ENCODE measurements at regions of chr21 and their contacts with region 1.

Region 1: DNA sequence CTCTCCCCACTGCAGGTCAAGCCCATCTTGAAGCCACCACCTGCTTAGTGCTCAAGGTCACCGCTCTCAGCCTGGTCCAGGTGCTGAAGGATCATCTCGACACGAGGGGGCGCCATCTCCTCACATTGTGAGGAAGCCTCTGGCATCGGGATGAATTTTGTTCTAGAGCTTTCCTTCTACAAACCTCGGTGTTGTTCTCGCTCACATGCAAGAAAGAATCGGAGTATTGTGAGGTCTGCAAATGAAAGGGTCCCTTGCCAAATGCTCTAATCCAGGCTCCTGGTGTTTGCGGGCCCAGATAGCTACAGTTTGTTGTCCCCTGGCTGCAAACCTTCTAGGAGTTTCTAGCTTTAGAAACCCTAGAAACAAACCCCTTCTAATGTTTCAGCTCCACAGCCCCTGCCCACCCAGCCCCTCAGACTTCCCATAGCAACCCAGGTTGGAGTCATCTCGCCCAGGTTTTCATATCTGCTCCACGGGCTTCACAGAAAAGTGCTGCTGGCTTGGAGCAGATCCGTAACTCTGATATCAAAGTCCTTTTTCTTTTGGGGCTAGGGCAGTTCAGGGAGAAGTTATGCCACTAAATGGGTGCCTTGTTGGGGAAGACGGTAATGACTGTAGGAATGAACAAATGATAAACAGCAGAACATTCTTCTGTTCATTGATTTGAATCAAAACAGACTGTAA is 8.6 kb upstream of the ATP5PO start:
- DNase-seq: peak; percentile 70
- ATAC-seq: peak; percentile 99
- H3K4me3 ChIP-seq: peak overlapping the region in 2 of 3 experiments; percentile 38 to 44; a peak in 4 of 6 replicates
- H3K27ac ChIP-seq: no peak overlapping the region
- H3K4me1 ChIP-seq: peaks cover 17% of the 10 kb centered on the region
- H3K27me3 ChIP-seq: no peaks in the 10 kb centered on the region
- CTCF ChIP-seq: peak; percentile 97
- EP300 ChIP-seq: no peak
- POLR2A ChIP-seq: no peak
- RAD21 ChIP-seq: peak; percentile 93

Region 2: DNA sequence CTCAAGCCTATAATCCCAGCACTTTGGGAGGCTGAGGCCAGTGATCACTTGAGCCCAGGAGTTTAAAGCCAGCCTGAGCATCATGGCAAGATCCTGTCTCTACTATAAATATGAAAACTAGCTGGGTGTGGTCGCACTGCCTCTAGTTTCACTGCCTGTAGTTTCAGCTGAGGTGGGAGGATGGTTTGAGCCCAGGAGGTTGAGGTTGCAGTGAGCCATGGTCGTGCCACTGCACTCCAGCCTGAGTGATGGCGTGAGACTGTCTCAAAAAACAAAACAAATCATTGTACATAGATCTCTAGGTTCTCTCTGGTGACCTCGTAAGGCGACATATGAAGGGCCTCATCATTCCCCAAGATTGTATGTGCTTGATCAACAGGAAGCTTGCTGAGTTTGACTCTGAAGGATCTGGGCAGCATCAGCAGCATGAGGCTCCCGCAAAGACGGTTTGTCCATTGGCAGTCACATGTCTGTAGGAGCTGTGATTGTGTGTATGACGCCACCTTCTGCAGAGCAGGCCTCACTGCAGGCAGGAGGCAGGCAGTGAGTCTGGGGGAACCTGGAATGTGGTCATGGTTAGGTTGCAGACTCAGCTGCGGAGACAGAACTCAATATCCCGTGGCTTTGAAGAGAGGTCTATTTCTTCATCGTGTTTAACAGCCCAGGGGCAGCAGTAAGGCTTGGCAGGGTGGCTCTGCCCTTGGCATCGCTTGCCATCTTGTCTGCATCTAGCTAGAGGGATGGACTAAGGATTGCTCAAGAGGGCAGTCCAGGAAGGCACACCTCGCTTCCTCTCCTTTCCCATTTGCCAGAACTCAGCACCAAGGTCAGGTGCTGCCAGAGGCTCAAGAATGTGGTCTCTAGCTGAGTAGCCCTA is 22.6 kb before region 1 on chr21:
- CTCF ChIA-PET with region 1: no interaction called
- POLR2A ChIA-PET with region 1: no interaction called
- in situ Hi-C with region 1: no loop called
- intact Hi-C with region 1: no loop called
- DNase-seq: peak; percentile 20
- ATAC-seq: peak; percentile 88
- H3K4me3 ChIP-seq: no peak overlapping the region
- H3K27ac ChIP-seq: no peak overlapping the region
- H3K4me1 ChIP-seq: no peaks in the 10 kb centered on the region
- H3K27me3 ChIP-seq: no peaks in the 10 kb centered on the region
- CTCF ChIP-seq: peak; percentile 61
- EP300 ChIP-seq: no peak
- POLR2A ChIP-seq: no peak
- RAD21 ChIP-seq: 0 out of 2 replicates have a peak, but pooled peaks have one; percentile 17

Region 3: GRCh38 chr21:34073032-34073869 is 149.0 kb after region 1 on chr21 and contains the starts of genes MRPS6 and SLC5A3:
- CTCF ChIA-PET with region 1: no interaction called
- POLR2A ChIA-PET with region 1: interaction called, 4 read pairs
- in situ Hi-C with region 1: loop called (anchors 5 kb)
- intact Hi-C with region 1: loop called (anchors 5 kb)
- DNase-seq: peak; percentile 47
- ATAC-seq: peak; percentile 84
- H3K4me3 ChIP-seq: peak within 1 kb of the TSS; percentile 76 to 84 (median 78)
- H3K27ac ChIP-seq: peak within 1 kb of the TSS; percentile 74
- H3K4me1 ChIP-seq: peaks cover 46% of the 10 kb centered on the region
- H3K27me3 ChIP-seq: 0 out of 5 replicates have a peak, but pooled peaks cover 0 to 4% of the 10 kb centered on the region in 2 experiments
- CTCF ChIP-seq: peak; percentile 73
- EP300 ChIP-seq: no peak
- POLR2A ChIP-seq: peak; percentile 94 to 99
- RAD21 ChIP-seq: peak; percentile 32; the same call in 1 of the 2 replicates
- total RNA-seq, gene MRPS6: 26.9 and 35.5 TPM in 2 replicates
- total RNA-seq, gene SLC5A3: 10.1 and 11.2 TPM in 2 replicates

Region 4: GRCh38 chr21:34202553-34203372 is 278.5 kb after region 1 on chr21:
- CTCF ChIA-PET with region 1: interaction called, 8 read pairs
- POLR2A ChIA-PET with region 1: interaction called, 4 read pairs
- in situ Hi-C with region 1: loop called (anchors 5 kb)
- intact Hi-C with region 1: loop called (anchors 5 kb)
- DNase-seq: no peak
- ATAC-seq: peak; percentile 42
- H3K4me3 ChIP-seq: peak overlapping the region; percentile 47 to 77 (median 61); a peak in 4 of 6 replicates
- H3K27ac ChIP-seq: peak overlapping the region; percentile 70
- H3K4me1 ChIP-seq: peaks cover 52% of the 10 kb centered on the region
- H3K27me3 ChIP-seq: no peaks in the 10 kb centered on the region
- CTCF ChIP-seq: no peak
- EP300 ChIP-seq: no peak
- POLR2A ChIP-seq: no peak
- RAD21 ChIP-seq: no peak

Region 5: DNA sequence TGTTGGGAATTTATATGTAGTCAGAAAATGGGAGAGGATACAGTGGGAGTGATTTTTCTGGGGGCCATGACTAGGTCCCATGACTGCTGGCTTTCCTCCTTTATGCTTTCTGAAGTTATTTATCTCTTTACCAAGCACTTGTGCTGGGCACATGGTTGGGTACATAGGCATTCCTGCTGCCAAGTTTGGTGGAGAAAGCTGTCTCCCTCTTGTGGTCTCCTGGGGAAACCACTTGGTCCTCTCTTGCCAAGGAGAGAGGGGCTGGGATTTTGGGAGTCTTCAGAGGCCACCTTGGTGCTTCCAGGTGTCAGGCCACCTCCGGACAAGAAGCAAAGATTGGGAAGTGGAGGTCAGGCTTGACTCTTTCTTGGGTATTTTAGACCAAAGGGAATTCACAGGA is 319.3 kb after region 1 on chr21:
- CTCF ChIA-PET with region 1: interaction called, 17 read pairs
- POLR2A ChIA-PET with region 1: no interaction called
- in situ Hi-C with region 1: loop called (anchors 5 kb)
- intact Hi-C with region 1: loop called (anchors 2 kb)
- DNase-seq: peak; percentile 5
- ATAC-seq: peak; percentile 57; the same call in 2 of the 3 replicates
- H3K4me3 ChIP-seq: no peak overlapping the region
- H3K27ac ChIP-seq: no peak overlapping the region
- H3K4me1 ChIP-seq: no peaks in the 10 kb centered on the region
- H3K27me3 ChIP-seq: no peaks in the 10 kb centered on the region
- CTCF ChIP-seq: peak; percentile 59
- EP300 ChIP-seq: no peak
- POLR2A ChIP-seq: no peak
- RAD21 ChIP-seq: peak; percentile 14; the same call in 1 of the 2 replicates

Region 6: DNA sequence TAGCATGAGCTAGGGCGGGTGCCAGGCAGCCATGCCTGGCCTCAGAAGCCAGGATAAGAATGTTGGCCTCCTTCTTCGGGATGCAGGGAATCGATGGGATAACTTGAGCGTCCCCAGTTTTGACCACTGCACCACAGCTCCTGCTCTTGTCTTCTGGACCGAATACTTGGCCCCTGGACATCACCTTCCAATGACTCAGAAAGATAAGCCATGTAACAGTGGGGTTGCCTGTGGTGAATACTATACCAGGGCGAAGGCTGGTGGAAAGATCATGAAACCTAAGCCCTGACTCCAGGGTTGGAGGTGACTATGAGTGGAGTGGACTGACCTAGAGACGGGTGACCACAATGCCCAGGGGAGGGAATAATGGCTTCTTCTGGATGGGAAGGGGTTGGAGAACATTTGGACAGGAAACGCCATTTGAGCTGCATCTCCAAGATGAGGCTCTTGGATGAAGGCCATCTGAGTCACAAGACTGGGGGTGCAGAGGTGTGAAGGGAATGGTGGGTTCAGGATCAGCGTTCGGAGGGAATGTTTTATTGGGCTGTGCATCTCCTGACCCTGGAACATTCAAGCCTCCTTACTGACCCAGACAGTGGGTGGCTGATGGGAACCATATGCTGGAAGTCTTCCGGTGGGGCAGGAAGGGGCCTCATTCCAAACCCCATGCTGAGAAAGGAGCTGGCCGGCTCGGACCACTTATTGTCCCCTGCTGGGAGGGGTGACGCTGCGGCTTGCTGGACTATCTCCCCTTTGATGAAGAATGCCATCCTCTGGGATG is 421.1 kb after region 1 on chr21:
- CTCF ChIA-PET with region 1: interaction called, 35 read pairs
- POLR2A ChIA-PET with region 1: interaction called, 6 read pairs
- in situ Hi-C with region 1: no loop called
- intact Hi-C with region 1: loop called (anchors 2 kb)
- DNase-seq: no peak
- ATAC-seq: no peak
- H3K4me3 ChIP-seq: no peak overlapping the region
- H3K27ac ChIP-seq: no peak overlapping the region
- H3K4me1 ChIP-seq: peaks cover 13% of the 10 kb centered on the region
- H3K27me3 ChIP-seq: peaks cover 3 to 44% of the 10 kb centered on the region in 2 experiments; a peak in 3 of 5 replicates
- CTCF ChIP-seq: no peak
- EP300 ChIP-seq: no peak
- POLR2A ChIP-seq: no peak
- RAD21 ChIP-seq: no peak

Region 7: DNA sequence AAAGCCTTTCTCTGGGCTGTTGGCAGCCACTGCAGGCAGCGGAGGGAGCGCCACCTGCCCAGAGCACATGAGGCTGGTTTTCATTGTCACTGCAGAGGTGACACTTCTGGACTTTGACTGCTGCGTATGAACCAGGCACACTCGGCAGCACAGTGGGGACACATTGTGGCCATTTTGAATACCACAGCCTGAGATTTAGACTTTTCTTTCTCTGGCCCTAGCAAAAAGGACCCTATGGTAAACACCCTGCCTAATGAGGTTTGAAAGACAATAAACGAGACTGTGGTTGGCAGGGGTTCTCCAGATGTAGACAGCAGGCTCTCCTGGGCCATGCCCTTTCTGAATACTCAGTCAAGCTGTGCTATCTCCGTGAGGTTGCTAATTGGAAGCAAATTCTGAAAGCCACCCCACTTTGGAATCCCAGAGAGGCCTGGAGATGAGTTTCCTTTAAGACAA is 427.6 kb after region 1 on chr21:
- CTCF ChIA-PET with region 1: interaction called, 35 read pairs
- POLR2A ChIA-PET with region 1: interaction called, 6 read pairs
- in situ Hi-C with region 1: no loop called
- intact Hi-C with region 1: loop called (anchors 2 kb)
- DNase-seq: peak; percentile 80
- ATAC-seq: peak; percentile 99
- H3K4me3 ChIP-seq: no peak overlapping the region
- H3K27ac ChIP-seq: no peak overlapping the region
- H3K4me1 ChIP-seq: peaks cover 22% of the 10 kb centered on the region; the same call in 1 of the 2 replicates
- H3K27me3 ChIP-seq: peaks cover 0 to 4% of the 10 kb centered on the region in 2 experiments; a peak in 2 of 5 replicates
- CTCF ChIP-seq: peak; percentile 93
- EP300 ChIP-seq: no peak
- POLR2A ChIP-seq: no peak
- RAD21 ChIP-seq: peak; percentile 84

Measured in HepG2 (cell line).